Activated T-helper 1 cell treated with anti-CD3 and anti-CD28 coated beads, Interleukin-12 subunit alpha, Interleukin-12 subunit beta, Interleukin-2, Interleukin-4 antibody, amounts not matched to agents 30 ng/mL and 10 ng/mL and 1 ng/mL, durations not matched to agents 14 hours and 24 hours and 36 hours (primary cell): ENCODE measurements at regions of chr3 and their contacts with region 1.

Region 1: DNA sequence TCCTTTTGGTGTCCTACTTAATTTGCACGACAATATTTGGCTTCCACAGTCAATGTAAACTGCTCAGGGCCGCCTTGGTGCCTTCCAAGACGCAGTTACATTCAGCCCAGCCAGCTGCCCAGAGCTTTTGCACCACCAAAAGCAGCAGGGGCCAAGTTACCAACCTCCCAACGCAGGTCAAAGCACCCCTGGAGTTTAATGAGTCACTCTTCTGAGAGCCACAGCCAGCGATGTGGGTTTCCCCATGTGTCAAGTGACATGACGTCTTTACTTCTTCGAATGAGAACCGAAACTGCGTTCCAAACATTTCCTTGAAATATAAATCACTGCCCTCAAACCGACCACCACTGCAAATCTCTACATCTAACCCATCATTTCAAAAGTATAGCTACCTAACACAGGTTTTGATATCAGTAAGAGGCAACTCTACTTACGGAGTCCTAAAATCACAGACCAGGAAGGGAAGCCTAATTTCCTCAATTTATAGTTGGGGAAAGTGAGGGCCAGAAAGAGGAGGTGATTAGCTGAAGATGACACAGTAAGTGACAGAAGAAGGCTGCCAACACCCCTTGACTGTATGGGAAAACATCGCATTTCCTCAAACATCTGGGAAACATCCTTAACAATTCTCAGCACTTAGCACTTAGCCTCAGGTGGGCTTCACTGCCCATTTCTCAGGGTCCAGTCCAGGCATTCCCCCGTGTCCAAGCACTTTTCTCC is 24.5 kb downstream of the MB21D2 start:
- DNase-seq: peak; percentile 81
- H3K4me3 Mint-ChIP-seq: peak overlapping the region; percentile 15
- H3K27ac Mint-ChIP-seq: peak overlapping the region; percentile 88
- H3K4me1 Mint-ChIP-seq: peaks cover 95% of the 10 kb centered on the region
- H3K27me3 Mint-ChIP-seq: peaks cover 2% of the 10 kb centered on the region

Region 2: DNA sequence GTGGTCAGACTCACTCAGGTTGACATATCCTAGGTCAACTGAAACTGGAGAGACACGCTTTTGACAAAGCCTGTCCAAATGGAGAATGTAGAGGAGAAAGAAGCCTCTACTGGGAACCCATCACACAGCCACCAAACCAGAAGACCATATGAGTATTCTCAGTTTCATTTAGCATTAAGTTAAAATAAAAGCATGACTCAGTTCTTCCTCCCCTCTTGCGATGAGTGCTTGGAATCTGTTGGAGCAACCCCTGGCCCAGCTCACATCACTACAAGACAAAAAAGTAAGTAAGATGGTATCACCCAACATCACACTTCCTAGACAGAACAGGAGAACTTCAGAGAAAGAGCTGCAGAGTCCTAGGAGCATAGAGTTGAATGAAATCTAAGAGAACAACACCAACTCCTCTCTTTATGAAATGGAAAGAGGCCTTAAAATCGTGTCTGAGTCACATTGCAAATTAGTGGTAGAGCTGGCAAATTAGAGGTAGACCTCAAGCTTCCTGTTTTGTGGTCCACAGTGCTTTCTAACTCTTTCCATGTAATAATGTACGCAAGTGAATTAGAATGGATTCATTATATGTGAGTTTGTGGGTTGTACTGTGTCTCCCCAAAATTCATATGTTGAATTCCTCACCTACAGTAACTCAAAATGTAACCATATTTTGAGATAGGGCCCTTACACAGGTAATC is 217.0 kb before region 1 on chr3:
- intact Hi-C with region 1: loop called (anchors 1 kb)
- DNase-seq: no peak
- H3K4me3 Mint-ChIP-seq: no peak overlapping the region
- H3K27ac Mint-ChIP-seq: peak overlapping the region; percentile 97
- H3K4me1 Mint-ChIP-seq: peaks cover 12% of the 10 kb centered on the region
- H3K27me3 Mint-ChIP-seq: peaks cover 12% of the 10 kb centered on the region

Region 3: DNA sequence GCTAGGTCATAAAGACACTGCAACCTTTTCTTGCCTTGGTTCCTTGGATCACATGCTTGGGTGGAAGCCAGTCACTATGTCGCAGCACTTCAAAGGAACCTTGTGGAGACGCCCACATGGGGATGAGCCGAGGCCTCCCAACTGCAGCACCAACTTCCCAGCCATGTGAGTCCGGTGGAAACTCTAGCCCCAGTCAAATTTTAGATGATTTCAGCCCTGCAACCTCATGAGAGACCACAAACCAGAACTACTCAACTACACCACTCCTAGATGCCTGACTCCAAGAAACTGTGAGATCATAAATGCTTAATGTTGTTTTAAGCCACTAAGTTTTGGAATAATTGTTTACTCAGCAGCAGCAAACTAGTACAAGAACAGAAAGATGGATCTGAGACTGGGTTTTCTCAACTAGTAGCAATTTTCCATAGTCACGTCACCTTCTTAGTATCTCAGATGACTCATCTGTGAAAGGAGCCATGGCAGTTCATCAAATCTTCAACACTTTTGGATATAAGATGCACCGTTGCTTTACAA is 62.0 kb before region 1 on chr3:
- intact Hi-C with region 1: loop called (anchors 1 kb)
- DNase-seq: peak; percentile 15
- H3K4me3 Mint-ChIP-seq: peak overlapping the region; percentile 25
- H3K27ac Mint-ChIP-seq: peak overlapping the region; percentile 88
- H3K4me1 Mint-ChIP-seq: peaks cover 67% of the 10 kb centered on the region
- H3K27me3 Mint-ChIP-seq: no peaks in the 10 kb centered on the region

Region 4: DNA sequence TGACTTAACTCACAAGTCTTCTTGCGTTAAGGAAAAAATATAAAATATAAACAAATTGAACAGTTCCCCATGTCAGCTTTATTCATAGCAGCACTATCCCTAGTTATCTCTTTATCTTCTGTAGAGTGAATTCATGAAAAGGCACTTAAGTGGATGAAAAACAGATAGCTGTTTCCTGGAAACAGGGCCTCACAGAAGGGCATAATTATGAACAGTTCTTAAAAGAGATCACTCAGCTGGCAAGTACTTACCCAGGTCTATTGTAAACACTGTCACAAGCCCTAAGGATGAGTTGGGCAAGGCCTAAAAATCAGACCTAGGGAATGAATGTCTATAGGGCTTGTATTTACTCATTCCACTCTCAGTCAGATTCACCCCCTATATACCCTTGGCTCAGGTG is 13.8 kb after region 1 on chr3:
- intact Hi-C with region 1: loop called (anchors 2 kb)
- DNase-seq: no peak
- H3K4me3 Mint-ChIP-seq: no peak overlapping the region
- H3K27ac Mint-ChIP-seq: peak overlapping the region; percentile 64
- H3K4me1 Mint-ChIP-seq: peaks cover 59% of the 10 kb centered on the region
- H3K27me3 Mint-ChIP-seq: peaks cover 2% of the 10 kb centered on the region

Region 5: GRCh38 chr3:193040836-193041672 is 147.9 kb after region 1 on chr3:
- intact Hi-C with region 1: loop called (anchors 2 kb)
- DNase-seq: no peak
- H3K4me3 Mint-ChIP-seq: no peak overlapping the region
- H3K27ac Mint-ChIP-seq: no peak overlapping the region
- H3K4me1 Mint-ChIP-seq: peaks cover 10% of the 10 kb centered on the region
- H3K27me3 Mint-ChIP-seq: peaks cover 8% of the 10 kb centered on the region

Region 6: DNA sequence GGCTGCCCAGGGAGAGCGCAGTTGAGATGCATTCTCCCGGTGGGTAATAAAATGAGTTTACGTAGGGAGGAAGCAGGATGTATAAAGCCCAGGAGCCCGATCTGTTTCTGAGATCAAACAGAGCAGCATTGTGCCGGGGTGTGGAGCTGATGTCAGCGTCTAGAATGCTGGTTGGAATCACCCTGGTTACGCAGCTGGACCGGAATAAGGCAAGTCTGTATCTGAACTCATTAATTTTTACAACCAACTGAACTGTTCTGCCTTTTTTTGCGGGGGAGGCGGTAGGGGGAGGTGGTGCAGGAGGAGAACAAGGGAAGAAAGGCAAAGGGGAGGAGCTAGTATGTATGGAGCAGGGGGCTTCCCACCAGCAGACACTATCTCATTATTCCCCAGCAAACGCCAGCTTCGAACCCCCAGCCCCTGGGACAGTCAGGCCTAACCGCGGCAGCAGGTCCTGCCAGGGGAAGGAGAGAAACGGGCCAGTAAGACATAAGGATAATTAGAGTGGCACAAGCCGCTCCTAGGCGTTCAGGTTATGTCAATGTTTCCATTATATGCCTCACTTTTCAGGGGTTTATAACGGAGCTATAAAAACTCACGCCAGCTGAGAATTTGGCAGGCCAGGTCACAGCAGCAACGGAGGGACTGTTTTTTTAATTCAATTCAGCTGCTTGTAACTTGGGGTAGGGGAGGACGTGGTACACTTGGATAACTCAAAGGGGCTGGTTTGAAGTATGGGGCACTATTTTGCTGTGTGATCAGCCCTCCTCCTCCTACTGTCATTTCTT is 1067.5 kb after region 1 on chr3:
- intact Hi-C with region 1: loop called (anchors 10 kb)
- DNase-seq: no peak
- H3K4me3 Mint-ChIP-seq: no peak overlapping the region
- H3K27ac Mint-ChIP-seq: no peak overlapping the region
- H3K4me1 Mint-ChIP-seq: peaks cover 44% of the 10 kb centered on the region
- H3K27me3 Mint-ChIP-seq: peaks cover 27% of the 10 kb centered on the region